Heart right ventricle (tissue), 16 donors: ENCODE measurements at regions of chr4 and their contacts with region 1.

Region 1: DNA sequence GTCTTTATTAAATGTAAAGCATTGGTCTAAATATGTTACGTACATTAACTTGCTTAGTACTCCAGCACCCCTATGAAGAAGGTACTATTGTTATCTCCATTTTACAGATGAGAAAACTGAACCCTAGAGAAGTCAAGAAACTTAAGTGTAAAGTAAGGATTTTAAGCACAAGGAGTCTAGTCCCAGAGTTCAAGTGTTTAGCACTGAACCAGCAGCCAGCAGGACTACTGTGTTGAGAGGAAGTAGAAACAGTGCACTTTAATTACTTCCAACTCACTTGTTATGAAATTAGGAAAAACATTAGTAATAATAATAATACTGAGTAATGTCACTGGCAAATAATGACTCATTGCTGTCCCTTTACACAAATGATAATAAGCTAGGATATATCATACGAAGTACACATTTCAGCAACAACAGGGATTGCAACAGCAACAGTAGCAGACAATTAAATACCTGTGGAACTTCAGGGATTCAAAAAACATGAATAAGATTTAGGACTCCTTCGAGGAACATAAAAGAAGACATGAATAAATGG is 548.1 kb upstream of the HS3ST1 start:
- DNase-seq: no peak
- ATAC-seq: no peak
- H3K4me3 ChIP-seq: no peak overlapping the region
- H3K27ac ChIP-seq: no peak overlapping the region
- H3K4me1 ChIP-seq: no peaks in the 10 kb centered on the region
- H3K27me3 ChIP-seq: peaks cover 0 to 2% (median 0%) of the 10 kb centered on the region in 7 donors
- CTCF ChIP-seq: no peak

Region 2: GRCh38 chr4:12022409-12022808 is 45.6 kb after region 1 on chr4:
- intact Hi-C with region 1: loop called in 1 of 10 experiments (anchors 1 kb)
- DNase-seq: no peak
- ATAC-seq: no peak
- H3K4me3 ChIP-seq: no peak overlapping the region
- H3K27ac ChIP-seq: no peak overlapping the region
- H3K4me1 ChIP-seq: no peaks in the 10 kb centered on the region
- H3K27me3 ChIP-seq: no peaks in the 10 kb centered on the region
- CTCF ChIP-seq: no peak